PC-3 (cell line): ENCODE measurements at regions of chr3 and their contacts with region 1.

Region 1: DNA sequence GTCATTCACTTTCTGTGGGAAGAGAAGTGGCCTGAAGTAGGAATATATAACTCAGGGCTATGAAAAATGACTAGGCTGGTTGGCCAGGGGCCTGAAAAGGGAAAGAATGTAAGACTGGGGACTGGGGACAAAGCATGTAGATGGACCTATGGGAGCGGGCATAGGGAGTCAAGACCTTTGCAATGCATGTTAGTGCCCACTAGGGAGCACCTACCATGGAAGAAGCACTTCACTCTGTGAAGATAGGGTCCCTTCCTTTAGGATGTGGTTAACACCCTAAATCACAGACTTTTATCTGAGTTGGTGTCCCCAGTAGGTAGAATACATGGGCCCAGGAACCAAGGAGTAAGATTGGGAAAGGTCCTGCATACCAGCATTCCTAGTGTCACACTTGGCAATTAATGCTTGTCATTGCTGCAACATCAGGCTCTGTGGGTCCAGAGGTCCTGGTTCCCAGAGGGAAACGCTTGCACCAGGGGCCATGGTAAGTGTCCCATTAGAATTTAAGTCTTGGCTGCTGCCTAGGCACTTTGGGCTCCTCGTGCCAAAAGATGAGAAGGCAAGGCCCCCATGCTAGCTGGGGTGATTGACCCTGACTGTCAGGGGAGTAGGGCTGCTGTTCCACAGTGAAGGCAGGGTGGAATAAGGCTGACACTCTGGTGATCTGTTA is 79.6 kb downstream of the CRYGS start:
- DNase-seq: peak; percentile 14
- ATAC-seq: no peak
- H3K4me3 ChIP-seq: no peak overlapping the region
- H3K27ac ChIP-seq: no peak overlapping the region
- H3K4me1 ChIP-seq: peaks cover 21% of the 10 kb centered on the region
- H3K27me3 ChIP-seq: no peaks in the 10 kb centered on the region
- CTCF ChIP-seq: peak; percentile 40

Region 2: DNA sequence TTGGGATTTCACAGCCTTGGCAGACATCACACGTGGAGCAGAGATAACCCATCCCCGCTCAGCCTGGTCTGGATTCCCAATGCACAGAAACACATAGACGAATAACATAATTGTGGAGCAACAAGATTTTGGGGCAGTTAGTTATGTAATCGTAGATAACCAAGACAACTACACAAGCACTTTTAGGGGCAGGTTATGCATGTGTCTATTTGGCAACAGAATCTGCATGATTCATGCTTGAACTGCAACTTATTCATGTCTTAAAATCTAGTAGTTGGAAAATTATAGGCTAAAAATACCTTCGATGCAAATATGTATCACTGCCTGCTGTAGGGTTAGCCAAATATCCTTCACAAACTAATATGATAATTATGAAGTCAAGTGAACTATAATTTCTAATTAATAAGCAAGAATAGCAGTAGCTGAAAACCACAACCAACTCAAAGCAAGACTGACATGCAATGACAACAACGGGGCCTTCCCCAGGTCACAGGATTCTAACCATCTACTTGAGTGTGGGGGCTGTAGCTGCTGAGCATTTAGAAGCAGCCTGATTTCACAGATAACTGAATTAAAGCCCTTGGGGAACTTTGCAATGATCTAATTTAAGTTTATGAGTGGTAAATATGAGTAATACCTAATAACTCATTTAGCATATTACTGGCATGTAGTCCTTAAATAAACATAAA is 133.6 kb before region 1 on chr3:
- CTCF ChIA-PET with region 1: no interaction called
- POLR2A ChIA-PET with region 1: no interaction called
- intact Hi-C with region 1: no loop called
- DNase-seq: peak; percentile 13
- ATAC-seq: peak; percentile 46; the same call in 1 of the 2 replicates
- H3K4me3 ChIP-seq: no peak overlapping the region
- H3K27ac ChIP-seq: peak overlapping the region; percentile 50
- H3K4me1 ChIP-seq: peaks cover 12% of the 10 kb centered on the region
- H3K27me3 ChIP-seq: peaks cover 48% of the 10 kb centered on the region
- CTCF ChIP-seq: no peak

Region 3: GRCh38 chr3:186381424-186382216 is 82.9 kb before region 1 on chr3:
- CTCF ChIA-PET with region 1: no interaction called
- POLR2A ChIA-PET with region 1: no interaction called
- intact Hi-C with region 1: loop called (anchors 5 kb)
- DNase-seq: no peak
- ATAC-seq: no peak
- H3K4me3 ChIP-seq: no peak overlapping the region
- H3K27ac ChIP-seq: no peak overlapping the region
- H3K4me1 ChIP-seq: no peaks in the 10 kb centered on the region
- H3K27me3 ChIP-seq: peaks cover 10% of the 10 kb centered on the region; the same call in 1 of the 2 replicates
- CTCF ChIP-seq: no peak

Region 4: GRCh38 chr3:186452517-186452916 is 12.0 kb before region 1 on chr3:
- CTCF ChIA-PET with region 1: no interaction called
- POLR2A ChIA-PET with region 1: no interaction called
- intact Hi-C with region 1: loop called (anchors 1 kb)
- DNase-seq: peak; percentile 95
- ATAC-seq: peak; percentile 95
- H3K4me3 ChIP-seq: no peak overlapping the region
- H3K27ac ChIP-seq: peak overlapping the region; percentile 77
- H3K4me1 ChIP-seq: peaks cover 23% of the 10 kb centered on the region
- H3K27me3 ChIP-seq: no peaks in the 10 kb centered on the region
- CTCF ChIP-seq: no peak